ENCODE measurements at regions of chr22 and their contacts with region 1.

Region 1: GRCh38 chr22:36387752-36388518 is at the start of gene MYH9:
- DNase-seq: peak; percentile 96 to 100 (median 99)
- H3K4me3 ChIP-seq: peak within 1 kb of the TSS; percentile 57 to 99 (median 89)
- H3K27ac ChIP-seq: peak within 1 kb of the TSS; percentile 72 to 95 (median 88)
- H3K27me3 ChIP-seq: no peaks in the 10 kb centered on the region
- CTCF ChIP-seq: peak in 22 of 56 donors; percentile 4 to 50 (median 18)
- total RNA-seq, gene MYH9: 95.7 to 282 (median 162) TPM

Region 2: DNA sequence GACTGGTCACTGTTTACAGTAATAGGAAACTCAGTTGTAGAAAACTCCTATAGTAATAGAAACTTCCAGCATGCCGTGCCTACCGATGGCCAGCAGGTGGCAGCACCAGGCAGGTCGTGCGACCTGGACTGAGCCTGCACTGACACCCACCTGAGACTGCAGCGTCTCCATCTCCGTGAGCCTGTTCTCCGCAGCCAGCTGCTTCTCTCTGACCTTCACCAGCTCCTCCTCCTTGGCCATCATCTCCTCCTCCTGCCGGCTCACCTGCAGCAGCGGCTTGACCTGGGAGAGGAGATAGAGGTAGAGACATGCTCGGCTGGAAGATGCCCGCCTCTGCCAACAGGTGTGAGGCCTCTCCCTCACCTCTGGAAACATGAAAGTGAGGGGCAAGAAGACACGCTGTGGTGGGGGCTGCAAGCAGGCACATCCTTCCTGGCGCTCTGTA is 86.5 kb before region 1 on chr22:
- intact Hi-C with region 1: loop called in 1 of 2 experiments (anchors 2 kb)
- DNase-seq: peak; percentile 68 to 84 (median 78)
- H3K4me3 ChIP-seq: no peak overlapping the region
- H3K27ac ChIP-seq: peak overlapping the region in 17 of 59 donors; percentile 4 to 54 (median 31)
- H3K27me3 ChIP-seq: no peaks in the 10 kb centered on the region
- CTCF ChIP-seq: peak; percentile 89 to 100 (median 98)

Region 3: DNA sequence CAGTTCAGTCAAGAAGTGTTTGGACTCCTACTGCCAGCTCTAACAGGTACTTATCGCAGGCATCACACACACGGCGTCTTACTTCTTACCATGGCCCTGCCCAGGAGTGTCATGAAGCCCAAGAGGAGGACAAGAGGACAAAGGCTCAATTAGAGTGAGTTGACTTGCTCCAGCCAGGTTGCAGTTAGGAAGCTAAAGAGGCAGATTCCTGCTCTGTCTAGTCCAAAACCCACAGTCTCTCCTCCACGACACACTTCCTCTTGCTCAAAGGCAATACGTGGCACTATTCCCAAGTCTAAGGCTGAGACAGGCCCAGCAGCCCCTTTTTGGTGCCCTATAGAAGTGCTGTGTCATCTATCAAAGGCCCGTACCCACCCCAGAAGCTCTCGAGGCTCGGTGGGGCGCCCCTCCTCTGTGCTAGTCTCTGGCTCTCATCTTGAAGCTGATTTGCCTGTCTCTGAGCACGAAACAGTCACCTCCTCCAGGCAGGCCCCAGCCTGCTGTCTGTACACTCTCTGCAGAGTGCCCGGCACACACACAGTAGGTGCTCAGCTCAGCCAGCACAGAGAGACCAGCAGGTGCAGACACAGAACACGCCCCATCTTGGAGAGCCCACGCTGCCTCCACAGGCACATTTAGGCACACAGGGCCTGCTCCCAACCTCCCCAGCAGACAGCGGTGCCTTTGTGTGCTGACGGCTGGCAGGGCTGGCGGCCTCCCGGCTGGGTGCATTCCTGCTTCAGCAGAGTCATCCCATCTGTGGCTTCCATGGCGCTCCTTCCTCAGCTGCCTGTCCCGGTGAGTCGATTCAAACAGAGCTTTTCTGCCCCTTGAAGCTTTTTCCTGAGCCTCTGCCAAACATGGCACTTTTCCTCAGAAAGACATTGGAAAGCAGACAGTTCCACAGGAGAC is 53.0 kb before region 1 on chr22:
- intact Hi-C with region 1: loop called (anchors 2 to 5 kb)
- DNase-seq: peak; percentile 66 to 86 (median 83)
- H3K4me3 ChIP-seq: peak overlapping the region in 41 of 59 donors; percentile 1 to 57 (median 28)
- H3K27ac ChIP-seq: peak overlapping the region; percentile 68 to 99 (median 96)
- H3K27me3 ChIP-seq: no peaks in the 10 kb centered on the region
- CTCF ChIP-seq: peak in 7 of 56 donors; percentile 8 to 35 (median 22)

Region 4: GRCh38 chr22:36439481-36440271 is 51.7 kb after region 1 on chr22:
- intact Hi-C with region 1: no loop called
- DNase-seq: no peak
- H3K4me3 ChIP-seq: no peak overlapping the region
- H3K27ac ChIP-seq: no peak overlapping the region
- H3K27me3 ChIP-seq: no peaks in the 10 kb centered on the region
- CTCF ChIP-seq: no peak

Region 5: GRCh38 chr22:36470162-36470993 is 82.4 kb after region 1 on chr22:
- intact Hi-C with region 1: loop called (anchors 2 to 5 kb)
- DNase-seq: peak; percentile 67 to 88 (median 85)
- H3K4me3 ChIP-seq: no peak overlapping the region
- H3K27ac ChIP-seq: peak overlapping the region in 42 of 59 donors; percentile 0 to 83 (median 56)
- H3K27me3 ChIP-seq: no peaks in the 10 kb centered on the region
- CTCF ChIP-seq: peak; percentile 58 to 98 (median 95)

Measured in dorsolateral prefrontal cortex (tissue), 120 donors.